ENCODE measurements at regions of chr11 and their contacts with region 1.

Region 1: GRCh38 chr11:15101072-15101709 is 13.5 kb upstream of the INSC start:
- DNase-seq: peak in 8 of 9 experiments; percentile 20 to 62 (median 49)
- ATAC-seq: peak; percentile 62
- H3K4me3 ChIP-seq: no peak overlapping the region
- H3K4me3 Mint-ChIP-seq: no peak overlapping the region
- H3K27ac ChIP-seq: no peak overlapping the region
- H3K27ac Mint-ChIP-seq: no peak overlapping the region
- H3K4me1 ChIP-seq: no peaks in the 10 kb centered on the region
- H3K4me1 Mint-ChIP-seq: peaks cover 2% of the 10 kb centered on the region
- H3K27me3 ChIP-seq: no peaks in the 10 kb centered on the region
- H3K27me3 Mint-ChIP-seq: peaks cover 20% of the 10 kb centered on the region
- CTCF ChIP-seq: peak; percentile 79

Region 2: GRCh38 chr11:14636119-14636518 is 465.1 kb before region 1 on chr11:
- CTCF ChIA-PET with region 1: no interaction called
- POLR2A ChIA-PET with region 1: no interaction called
- intact Hi-C with region 1: no loop called
- DNase-seq: peak in 2 of 9 experiments; percentile 29 to 57
- ATAC-seq: peak; percentile 16
- H3K4me3 ChIP-seq: no peak overlapping the region
- H3K4me3 Mint-ChIP-seq: peak overlapping the region; percentile 27
- H3K27ac ChIP-seq: peak overlapping the region in 1 of 2 experiments; percentile 7
- H3K27ac Mint-ChIP-seq: peak overlapping the region; percentile 89
- H3K4me1 ChIP-seq: peaks cover 64% of the 10 kb centered on the region
- H3K4me1 Mint-ChIP-seq: peaks cover 66% of the 10 kb centered on the region
- H3K27me3 ChIP-seq: no peaks in the 10 kb centered on the region
- H3K27me3 Mint-ChIP-seq: no peaks in the 10 kb centered on the region
- CTCF ChIP-seq: no peak

Region 3: DNA sequence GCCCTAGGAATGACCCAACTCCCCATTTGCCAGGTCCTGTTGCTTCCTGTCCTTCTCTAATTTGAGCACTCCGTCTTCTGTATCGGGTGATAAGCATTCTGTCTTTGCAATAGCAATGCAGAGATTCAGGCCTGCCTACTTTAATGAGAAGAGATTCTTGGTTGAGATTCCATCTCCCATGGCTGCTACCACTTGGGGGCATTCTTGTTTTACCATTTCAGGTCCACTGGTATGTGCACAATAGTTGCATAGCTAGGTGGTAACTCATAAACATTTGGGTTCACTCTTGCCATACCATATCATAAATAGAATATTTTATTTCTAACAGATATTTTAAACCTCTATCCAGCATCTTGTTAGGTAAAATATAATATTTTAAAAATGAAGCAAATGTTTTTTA is 62.2 kb before region 1 on chr11:
- CTCF ChIA-PET with region 1: no interaction called
- POLR2A ChIA-PET with region 1: no interaction called
- intact Hi-C with region 1: no loop called
- DNase-seq: peak in 1 of 9 experiments; percentile 7
- ATAC-seq: no peak
- H3K4me3 ChIP-seq: no peak overlapping the region
- H3K4me3 Mint-ChIP-seq: no peak overlapping the region
- H3K27ac ChIP-seq: no peak overlapping the region
- H3K27ac Mint-ChIP-seq: no peak overlapping the region
- H3K4me1 ChIP-seq: no peaks in the 10 kb centered on the region
- H3K4me1 Mint-ChIP-seq: no peaks in the 10 kb centered on the region
- H3K27me3 ChIP-seq: peaks cover 0 to 3% of the 10 kb centered on the region in 2 experiments
- H3K27me3 Mint-ChIP-seq: peaks cover 14% of the 10 kb centered on the region
- CTCF ChIP-seq: no peak

Region 4: GRCh38 chr11:15208378-15209222 is 107.4 kb after region 1 on chr11:
- CTCF ChIA-PET with region 1: interaction called, 17 read pairs
- POLR2A ChIA-PET with region 1: no interaction called
- intact Hi-C with region 1: loop called in 1 of 2 experiments (anchors 1 kb)
- DNase-seq: peak; percentile 53 to 85 (median 73)
- ATAC-seq: peak; percentile 73
- H3K4me3 ChIP-seq: no peak overlapping the region
- H3K4me3 Mint-ChIP-seq: no peak overlapping the region
- H3K27ac ChIP-seq: no peak overlapping the region
- H3K27ac Mint-ChIP-seq: no peak overlapping the region
- H3K4me1 ChIP-seq: no peaks in the 10 kb centered on the region
- H3K4me1 Mint-ChIP-seq: no peaks in the 10 kb centered on the region
- H3K27me3 ChIP-seq: no peaks in the 10 kb centered on the region
- H3K27me3 Mint-ChIP-seq: peaks cover 3% of the 10 kb centered on the region
- CTCF ChIP-seq: peak; percentile 75

Region 5: GRCh38 chr11:16613512-16614381 is 1512.6 kb after region 1 on chr11:
- CTCF ChIA-PET with region 1: no interaction called
- POLR2A ChIA-PET with region 1: no interaction called
- intact Hi-C with region 1: loop called in 1 of 2 experiments (anchors 10 kb)
- DNase-seq: peak in 7 of 9 experiments; percentile 30 to 63 (median 57)
- ATAC-seq: peak; percentile 75
- H3K4me3 ChIP-seq: peak overlapping the region; percentile 27 to 50
- H3K4me3 Mint-ChIP-seq: peak overlapping the region; percentile 75
- H3K27ac ChIP-seq: no peak overlapping the region
- H3K27ac Mint-ChIP-seq: no peak overlapping the region
- H3K4me1 ChIP-seq: peaks cover 16% of the 10 kb centered on the region
- H3K4me1 Mint-ChIP-seq: peaks cover 26% of the 10 kb centered on the region
- H3K27me3 ChIP-seq: peaks cover 12 to 25% of the 10 kb centered on the region in 2 experiments
- H3K27me3 Mint-ChIP-seq: peaks cover 52% of the 10 kb centered on the region
- CTCF ChIP-seq: no peak

Measured in CD8-positive, alpha-beta T cell (primary cell).